HepG2 (cell line): ENCODE measurements at regions of chr11 and their contacts with region 1.

Region 1: GRCh38 chr11:107041088-107041444 is 22.8 kb upstream of the GUCY1A2 start:
- DNase-seq: no peak
- ATAC-seq: no peak
- H3K4me3 ChIP-seq: no peak overlapping the region
- H3K27ac ChIP-seq: no peak overlapping the region
- H3K4me1 ChIP-seq: no peaks in the 10 kb centered on the region
- H3K27me3 ChIP-seq: no peaks in the 10 kb centered on the region
- CTCF ChIP-seq: no peak
- EP300 ChIP-seq: no peak
- POLR2A ChIP-seq: no peak
- RAD21 ChIP-seq: no peak

Region 2: GRCh38 chr11:106087815-106088435 is 953.1 kb before region 1 on chr11:
- CTCF ChIA-PET with region 1: no interaction called
- POLR2A ChIA-PET with region 1: no interaction called
- in situ Hi-C with region 1: no loop called
- intact Hi-C with region 1: loop called (anchors 2 kb)
- DNase-seq: peak; percentile 62
- ATAC-seq: peak; percentile 75
- H3K4me3 ChIP-seq: no peak overlapping the region
- H3K27ac ChIP-seq: no peak overlapping the region
- H3K4me1 ChIP-seq: peaks cover 19% of the 10 kb centered on the region
- H3K27me3 ChIP-seq: no peaks in the 10 kb centered on the region
- CTCF ChIP-seq: peak; percentile 81
- EP300 ChIP-seq: no peak
- POLR2A ChIP-seq: no peak
- RAD21 ChIP-seq: 0 out of 2 replicates have a peak, but pooled peaks have one; percentile 36

Region 3: DNA sequence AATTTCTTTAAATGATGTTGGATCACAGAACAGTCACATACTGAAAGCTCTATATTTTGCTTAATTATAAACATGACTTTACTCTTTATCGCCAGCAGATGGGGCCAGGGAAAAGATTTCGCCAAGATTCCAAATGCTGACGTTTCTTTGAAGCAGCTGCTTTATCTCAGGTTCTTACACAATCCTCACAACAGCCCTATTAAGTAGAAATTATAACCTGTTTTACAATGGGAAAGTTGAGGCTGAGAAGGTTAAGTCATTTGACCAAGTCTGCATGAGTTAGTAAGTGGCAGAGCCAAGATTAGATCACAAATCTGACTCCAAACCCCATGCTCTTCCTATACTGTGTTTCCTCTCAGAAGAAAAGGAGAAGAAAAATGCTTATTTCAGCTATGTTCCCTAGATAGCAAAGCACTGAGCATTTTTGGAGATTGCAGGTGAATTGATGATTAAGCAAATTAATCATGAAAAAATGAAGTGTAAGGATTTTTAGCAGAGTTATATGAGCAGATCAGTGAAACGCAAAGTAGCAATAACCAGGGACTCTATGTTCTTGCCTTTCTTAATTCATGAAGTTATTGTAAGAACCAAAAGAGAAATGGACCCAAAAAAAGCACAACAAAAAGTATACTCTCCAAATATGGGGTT is 884.7 kb before region 1 on chr11:
- CTCF ChIA-PET with region 1: interaction called, 4 read pairs
- POLR2A ChIA-PET with region 1: no interaction called
- in situ Hi-C with region 1: no loop called
- intact Hi-C with region 1: loop called (anchors 1 kb)
- DNase-seq: peak; percentile 15
- ATAC-seq: peak; percentile 59
- H3K4me3 ChIP-seq: no peak overlapping the region
- H3K27ac ChIP-seq: no peak overlapping the region
- H3K4me1 ChIP-seq: no peaks in the 10 kb centered on the region
- H3K27me3 ChIP-seq: no peaks in the 10 kb centered on the region
- CTCF ChIP-seq: peak; percentile 53
- EP300 ChIP-seq: no peak
- POLR2A ChIP-seq: no peak
- RAD21 ChIP-seq: no peak

Region 4: GRCh38 chr11:106724293-106724892 is 316.7 kb before region 1 on chr11:
- CTCF ChIA-PET with region 1: interaction called, 5 read pairs
- POLR2A ChIA-PET with region 1: no interaction called
- in situ Hi-C with region 1: no loop called
- intact Hi-C with region 1: loop called (anchors 1 kb)
- DNase-seq: no peak
- ATAC-seq: no peak
- H3K4me3 ChIP-seq: no peak overlapping the region
- H3K27ac ChIP-seq: no peak overlapping the region
- H3K4me1 ChIP-seq: no peaks in the 10 kb centered on the region
- H3K27me3 ChIP-seq: no peaks in the 10 kb centered on the region
- CTCF ChIP-seq: no peak
- EP300 ChIP-seq: no peak
- POLR2A ChIP-seq: no peak
- RAD21 ChIP-seq: no peak

Region 5: DNA sequence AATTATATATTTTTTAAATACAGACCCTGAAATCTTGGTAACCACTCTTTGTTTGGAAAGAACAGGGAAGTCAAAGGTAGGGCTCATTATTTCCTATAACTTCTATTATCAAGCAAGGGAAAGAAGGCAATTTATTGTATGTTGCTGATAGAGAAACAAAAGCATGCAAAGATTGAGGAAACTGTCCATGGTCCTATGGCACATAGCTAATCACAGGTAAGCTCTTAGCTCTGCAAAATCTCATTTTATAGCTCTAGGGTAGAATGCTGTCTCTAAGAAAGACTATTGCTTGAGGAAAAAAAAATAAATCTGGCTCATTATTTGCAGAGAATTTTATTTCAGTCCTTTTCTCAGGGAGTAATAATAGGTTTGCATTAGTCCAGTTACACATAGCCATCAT is 15.4 kb before region 1 on chr11:
- CTCF ChIA-PET with region 1: no interaction called
- POLR2A ChIA-PET with region 1: no interaction called
- in situ Hi-C with region 1: no loop called
- intact Hi-C with region 1: no loop called
- DNase-seq: no peak
- ATAC-seq: no peak
- H3K4me3 ChIP-seq: no peak overlapping the region
- H3K27ac ChIP-seq: no peak overlapping the region
- H3K4me1 ChIP-seq: no peaks in the 10 kb centered on the region
- H3K27me3 ChIP-seq: no peaks in the 10 kb centered on the region
- CTCF ChIP-seq: no peak
- EP300 ChIP-seq: no peak
- POLR2A ChIP-seq: no peak
- RAD21 ChIP-seq: no peak